Activated T-helper 2 cell treated with anti-CD3 and anti-CD28 coated beads, Interferon-gamma antibody, Interleukin-2, Interleukin-4, amounts not matched to agents 10 μg/mL and 5 μg/mL and 100 μg/mL, durations not matched to agents 14 hours and 24 hours and 36 hours (primary cell): ENCODE measurements at regions of chr9 and their contacts with region 1.

Region 1: DNA sequence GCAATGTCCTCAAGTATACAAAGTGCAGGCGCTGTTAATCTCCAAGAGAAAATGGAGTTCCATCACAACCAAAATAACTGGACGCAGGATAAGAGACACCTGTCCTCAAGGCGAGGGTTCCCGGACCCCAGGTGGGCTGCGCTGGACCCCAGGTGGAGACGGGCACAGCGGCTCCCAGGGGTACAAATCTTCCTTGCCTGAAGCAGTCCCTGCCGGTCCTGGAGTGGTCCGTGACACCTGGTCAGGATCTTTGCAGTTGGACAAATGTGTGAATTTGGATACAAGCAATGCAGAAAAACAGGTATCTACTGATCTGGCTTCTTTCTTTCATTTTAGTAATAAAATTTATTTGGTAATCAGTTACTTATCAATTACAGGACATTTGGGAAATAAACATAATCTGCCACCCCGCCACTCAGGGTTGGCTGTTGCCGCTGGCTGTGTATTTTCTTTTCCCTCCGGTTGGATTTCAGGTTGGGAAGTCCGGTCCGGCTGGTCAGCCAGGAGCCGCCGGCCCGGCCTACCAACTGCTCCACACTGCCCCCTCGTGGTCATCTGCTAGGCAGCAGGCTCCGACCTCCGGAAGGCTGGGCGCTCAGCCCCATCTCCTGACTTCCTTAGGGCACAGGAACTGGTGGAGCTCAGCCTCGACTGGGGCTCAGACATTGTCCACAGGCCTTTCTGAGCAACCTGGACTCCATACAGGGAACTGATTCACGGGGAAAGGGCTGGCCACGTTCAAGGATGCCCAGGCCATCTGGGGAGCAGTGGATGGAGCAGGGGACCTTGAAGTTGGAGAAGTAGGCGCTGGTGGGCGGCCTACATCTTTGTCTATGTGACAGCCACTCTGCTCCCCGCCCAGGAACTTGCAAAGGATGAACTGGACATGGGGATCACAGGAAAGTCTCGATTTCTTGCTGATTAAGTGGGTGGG is 43.4 kb downstream of the NXNL2 start:
- DNase-seq: peak; percentile 60
- H3K4me3 Mint-ChIP-seq: peak overlapping the region; percentile 46
- H3K27ac Mint-ChIP-seq: no peak overlapping the region
- H3K4me1 Mint-ChIP-seq: peaks cover 4% of the 10 kb centered on the region
- H3K27me3 Mint-ChIP-seq: peaks cover 22% of the 10 kb centered on the region

Region 2: DNA sequence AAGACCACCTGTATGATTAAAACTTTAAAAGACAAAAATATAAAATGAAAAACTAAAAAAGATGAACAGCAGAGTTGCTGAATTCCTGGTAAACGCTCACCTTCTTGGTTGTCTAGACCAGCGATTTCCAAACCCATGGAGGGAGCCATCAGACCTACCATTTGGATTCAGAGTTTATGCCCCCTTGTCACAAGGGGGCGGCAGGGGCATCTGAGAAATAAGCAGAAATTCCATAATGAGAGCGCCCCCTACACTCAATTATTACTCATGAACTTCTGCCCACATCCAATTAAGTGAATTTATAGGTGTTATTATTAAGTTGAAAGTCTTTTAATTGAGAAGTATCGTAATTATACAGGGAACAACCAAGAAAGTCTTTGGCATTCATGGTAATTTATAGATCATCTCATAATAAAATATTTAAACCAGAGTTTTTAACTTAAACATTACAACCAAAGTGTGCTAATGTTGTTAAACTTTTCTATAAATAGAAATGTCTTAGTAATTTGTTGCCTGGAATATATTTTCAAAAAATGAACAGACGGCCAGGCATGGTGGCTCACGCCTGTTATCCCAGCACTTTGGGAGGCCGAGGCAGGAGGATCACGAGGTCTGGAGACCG is 404.9 kb before region 1 on chr9:
- intact Hi-C with region 1: loop called (anchors 5 kb)
- DNase-seq: peak; percentile 30
- H3K4me3 Mint-ChIP-seq: no peak overlapping the region
- H3K27ac Mint-ChIP-seq: no peak overlapping the region
- H3K4me1 Mint-ChIP-seq: peaks cover 8% of the 10 kb centered on the region
- H3K27me3 Mint-ChIP-seq: peaks cover 27% of the 10 kb centered on the region

Region 3: DNA sequence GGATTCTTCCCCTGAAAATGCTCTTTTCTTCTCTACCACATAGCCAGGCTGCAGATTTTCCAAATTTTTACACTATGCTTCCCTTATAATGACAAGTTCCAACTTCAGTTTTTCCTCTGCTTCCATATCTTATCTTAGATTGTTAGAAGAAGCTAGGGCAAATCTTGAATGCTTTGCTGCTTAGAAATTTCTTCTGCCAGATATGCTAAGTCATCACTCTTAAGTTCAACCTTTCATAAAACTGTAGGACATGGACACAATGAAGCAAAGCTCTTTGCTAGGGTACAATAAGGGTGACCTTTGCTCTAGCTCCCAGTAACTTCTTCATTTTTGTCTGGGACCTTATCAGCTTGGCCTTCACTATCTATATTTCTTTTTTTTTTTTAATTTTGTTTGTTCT is 45.3 kb after region 1 on chr9:
- intact Hi-C with region 1: no loop called
- DNase-seq: no peak
- H3K4me3 Mint-ChIP-seq: no peak overlapping the region
- H3K27ac Mint-ChIP-seq: no peak overlapping the region
- H3K4me1 Mint-ChIP-seq: no peaks in the 10 kb centered on the region
- H3K27me3 Mint-ChIP-seq: peaks cover 2% of the 10 kb centered on the region